Activated CD4-positive, alpha-beta T cell treated with anti-CD3 and anti-CD28 coated beads for 36 hours (primary cell): ENCODE measurements at regions of chr5 and their contacts with region 1.

Region 1: GRCh38 chr5:172714491-172715421 is 56.2 kb downstream of the DUSP1 start:
- DNase-seq: peak; percentile 82
- ATAC-seq: peak; percentile 84
- H3K4me3 Mint-ChIP-seq: no peak overlapping the region
- H3K27ac Mint-ChIP-seq: no peak overlapping the region
- H3K4me1 Mint-ChIP-seq: peaks cover 6% of the 10 kb centered on the region
- H3K27me3 Mint-ChIP-seq: peaks cover 5% of the 10 kb centered on the region

Region 2: GRCh38 chr5:172764849-172765765 is 50.4 kb after region 1 on chr5:
- CTCF ChIA-PET with region 1: interaction called, 12 read pairs
- POLR2A ChIA-PET with region 1: interaction called, 3 read pairs
- intact Hi-C with region 1: no loop called
- DNase-seq: peak; percentile 96
- ATAC-seq: peak; percentile 93
- H3K4me3 Mint-ChIP-seq: peak overlapping the region; percentile 72
- H3K27ac Mint-ChIP-seq: peak overlapping the region; percentile 91
- H3K4me1 Mint-ChIP-seq: peaks cover 45% of the 10 kb centered on the region
- H3K27me3 Mint-ChIP-seq: no peaks in the 10 kb centered on the region

Region 3: DNA sequence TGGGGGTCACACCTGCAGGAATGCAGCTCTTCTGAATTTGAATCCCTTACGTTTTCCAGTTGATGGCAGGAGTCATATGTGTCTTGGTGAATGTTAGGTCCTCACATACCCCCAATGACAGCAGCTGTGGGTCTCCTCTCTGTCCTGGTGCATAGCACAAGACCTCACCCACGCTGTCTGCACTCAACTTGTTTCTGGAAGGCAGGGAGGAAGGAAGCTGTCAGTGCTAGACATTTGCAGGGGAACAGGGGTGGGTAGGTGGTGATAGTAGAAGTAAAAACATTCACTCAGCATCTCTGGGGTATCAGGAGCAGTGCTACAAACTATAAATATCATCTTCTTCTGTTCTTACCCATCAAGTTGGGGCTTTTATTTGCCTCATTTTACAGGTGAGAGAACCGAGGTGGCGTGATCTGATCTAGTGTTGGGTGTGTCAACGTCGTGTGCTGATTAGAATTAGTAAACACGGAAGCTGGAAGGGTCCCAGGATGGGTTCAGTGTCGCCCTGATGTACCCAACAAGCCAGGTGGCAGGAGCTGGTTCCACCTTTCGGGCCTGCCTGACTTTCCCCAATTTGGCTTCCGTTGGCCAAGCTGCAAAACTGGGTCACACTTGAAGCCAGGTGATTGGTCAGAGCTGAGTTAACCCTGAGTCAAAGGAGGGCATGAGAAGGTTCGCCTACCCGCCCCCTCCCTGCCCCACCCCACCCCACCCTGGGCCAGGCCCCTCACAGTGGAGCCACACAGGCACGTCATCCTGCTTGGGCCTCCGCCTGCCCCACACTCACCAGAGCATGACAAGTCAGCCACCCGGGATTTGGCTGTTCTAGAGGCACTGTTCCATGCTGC is 135.1 kb after region 1 on chr5:
- CTCF ChIA-PET with region 1: interaction called, 5 read pairs
- POLR2A ChIA-PET with region 1: no interaction called
- intact Hi-C with region 1: loop called in 1 of 2 experiments (anchors 5 kb)
- DNase-seq: no peak
- ATAC-seq: no peak
- H3K4me3 Mint-ChIP-seq: no peak overlapping the region
- H3K27ac Mint-ChIP-seq: no peak overlapping the region
- H3K4me1 Mint-ChIP-seq: peaks cover 38% of the 10 kb centered on the region
- H3K27me3 Mint-ChIP-seq: no peaks in the 10 kb centered on the region

Region 4: DNA sequence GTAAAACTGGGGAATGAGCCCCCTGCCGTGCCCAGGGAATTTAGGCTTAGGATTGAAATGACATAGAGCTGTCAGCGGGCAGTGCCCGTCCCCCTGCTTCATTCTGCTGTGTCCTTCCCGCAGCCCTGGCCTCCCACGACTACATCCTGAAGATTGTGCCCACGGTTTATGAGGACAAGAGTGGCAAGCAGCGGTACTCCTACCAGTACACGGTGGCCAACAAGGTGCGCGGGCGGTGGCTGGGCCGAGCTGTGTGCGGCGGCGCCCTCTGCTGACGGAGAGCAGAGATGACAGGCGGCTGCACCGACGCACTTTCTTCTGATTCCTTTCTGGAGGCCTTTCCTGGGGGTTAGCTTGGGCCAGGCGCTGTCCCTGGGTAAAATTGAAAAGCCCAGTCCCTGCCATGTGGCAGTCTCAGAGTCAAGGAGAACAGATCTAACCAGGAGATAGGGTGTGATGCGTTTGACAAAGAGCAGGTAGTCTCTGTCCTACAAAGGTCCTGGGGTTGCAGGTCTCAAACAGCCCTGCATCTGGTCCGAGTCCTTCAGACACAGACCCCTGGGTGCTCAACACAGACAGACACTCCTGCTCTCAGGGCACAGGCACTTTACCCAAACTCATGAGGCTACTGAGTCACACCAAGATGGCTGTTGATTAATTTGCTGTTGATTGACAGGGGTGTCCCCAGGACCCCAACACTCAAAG is 217.7 kb after region 1 on chr5:
- CTCF ChIA-PET with region 1: interaction called, 279 read pairs
- POLR2A ChIA-PET with region 1: no interaction called
- intact Hi-C with region 1: loop called (anchors 1 kb)
- DNase-seq: peak; percentile 88
- ATAC-seq: peak; percentile 97
- H3K4me3 Mint-ChIP-seq: no peak overlapping the region
- H3K27ac Mint-ChIP-seq: no peak overlapping the region
- H3K4me1 Mint-ChIP-seq: peaks cover 4% of the 10 kb centered on the region
- H3K27me3 Mint-ChIP-seq: no peaks in the 10 kb centered on the region

Region 5: GRCh38 chr5:173144200-173145176 is 429.7 kb after region 1 on chr5 and contains the start of gene BNIP1:
- CTCF ChIA-PET with region 1: no interaction called
- POLR2A ChIA-PET with region 1: no interaction called
- intact Hi-C with region 1: loop called in 1 of 2 experiments (anchors 10 kb)
- DNase-seq: peak; percentile 98
- ATAC-seq: peak; percentile 94
- H3K4me3 Mint-ChIP-seq: peak within 1 kb of the TSS; percentile 99
- H3K27ac Mint-ChIP-seq: peak within 1 kb of the TSS; percentile 99
- H3K4me1 Mint-ChIP-seq: peaks cover 10% of the 10 kb centered on the region
- H3K27me3 Mint-ChIP-seq: no peaks in the 10 kb centered on the region
- total RNA-seq, gene BNIP1: 24.2 to 26.8 TPM

Region 6: GRCh38 chr5:173283318-173284288 is 568.8 kb after region 1 on chr5:
- CTCF ChIA-PET with region 1: no interaction called
- POLR2A ChIA-PET with region 1: no interaction called
- intact Hi-C with region 1: loop called in 1 of 2 experiments (anchors 5 kb)
- DNase-seq: peak; percentile 90
- ATAC-seq: peak; percentile 96
- H3K4me3 Mint-ChIP-seq: peak overlapping the region; percentile 25
- H3K27ac Mint-ChIP-seq: no peak overlapping the region
- H3K4me1 Mint-ChIP-seq: peaks cover 9% of the 10 kb centered on the region
- H3K27me3 Mint-ChIP-seq: peaks cover 44% of the 10 kb centered on the region